AG04450 (cell line): ENCODE measurements at regions of chr10 and their contacts with region 1.

Region 1: DNA sequence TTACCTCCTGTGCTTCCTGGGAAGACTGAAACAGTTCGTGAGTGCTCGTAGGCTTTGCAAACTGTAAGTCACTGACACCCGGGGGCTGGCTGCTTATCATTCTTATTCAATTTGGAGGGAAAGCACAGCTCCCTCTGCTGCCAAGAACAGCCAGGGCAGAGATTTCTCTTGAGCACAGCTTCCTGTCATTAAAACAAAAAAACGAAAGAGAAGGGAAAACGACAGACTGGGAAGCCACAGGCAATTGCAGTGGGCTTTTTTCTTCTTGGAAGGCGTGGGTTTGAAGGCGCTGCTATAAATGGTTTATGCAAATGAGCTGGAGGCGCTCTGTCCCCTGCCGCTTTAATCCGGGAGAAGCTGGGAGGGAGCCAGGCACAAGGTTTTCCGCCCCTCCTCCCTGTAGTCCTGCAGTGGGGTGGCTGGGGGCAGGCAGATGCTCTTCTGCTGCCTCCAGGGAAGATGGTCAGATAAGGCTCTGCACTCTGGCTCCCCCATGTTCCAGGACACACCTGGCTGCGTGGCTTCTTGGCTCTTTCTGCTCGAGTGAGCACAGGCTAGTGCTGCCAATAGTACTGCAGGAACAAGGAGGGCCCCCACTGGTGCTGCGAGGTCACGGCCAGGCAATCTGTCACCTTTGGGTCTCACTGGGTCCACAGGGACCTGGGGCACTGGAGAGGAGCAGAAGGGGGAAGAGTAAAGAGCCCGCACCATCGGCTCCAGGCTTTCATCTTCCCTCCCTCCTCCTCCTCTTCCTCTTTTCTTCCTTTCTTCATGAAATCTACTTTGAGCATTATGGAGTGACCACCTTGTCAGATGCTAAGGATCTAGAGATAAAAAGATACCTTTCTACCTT is 49.5 kb downstream of the NEURL1 start:
- DNase-seq: no peak
- H3K4me3 ChIP-seq: peak overlapping the region; percentile 51
- H3K27ac ChIP-seq: no peak overlapping the region
- H3K27me3 ChIP-seq: peaks cover 70% of the 10 kb centered on the region
- CTCF ChIP-seq: peak; percentile 67

Region 2: GRCh38 chr10:103416436-103417147 is 126.4 kb before region 1 on chr10:
- CTCF ChIA-PET with region 1: interaction called, 10 read pairs
- POLR2A ChIA-PET with region 1: no interaction called
- DNase-seq: peak; percentile 21
- H3K4me3 ChIP-seq: no peak overlapping the region
- H3K27ac ChIP-seq: no peak overlapping the region
- H3K27me3 ChIP-seq: no peaks in the 10 kb centered on the region
- CTCF ChIP-seq: peak; percentile 62

Region 3: GRCh38 chr10:103491493-103492381 is 51.3 kb before region 1 on chr10:
- CTCF ChIA-PET with region 1: interaction called, 10 read pairs
- POLR2A ChIA-PET with region 1: no interaction called
- DNase-seq: peak; percentile 92
- H3K4me3 ChIP-seq: no peak overlapping the region
- H3K27ac ChIP-seq: no peak overlapping the region
- H3K27me3 ChIP-seq: peaks cover 39% of the 10 kb centered on the region
- CTCF ChIP-seq: no peak

Region 4: GRCh38 chr10:103564776-103565520 is 22.0 kb after region 1 on chr10:
- CTCF ChIA-PET with region 1: no interaction called
- POLR2A ChIA-PET with region 1: no interaction called
- DNase-seq: no peak
- H3K4me3 ChIP-seq: no peak overlapping the region
- H3K27ac ChIP-seq: no peak overlapping the region
- H3K27me3 ChIP-seq: peaks cover 58% of the 10 kb centered on the region
- CTCF ChIP-seq: peak; percentile 62